ENCODE measurements at regions of chr6 and their contacts with region 1.

Region 1: GRCh38 chr6:90315354-90315950 is 18.8 kb upstream of the BACH2 start:
- DNase-seq: no peak
- ATAC-seq: peak; percentile 84
- H3K4me3 Mint-ChIP-seq: peak overlapping the region; percentile 55
- H3K27ac Mint-ChIP-seq: peak overlapping the region; percentile 91
- H3K4me1 Mint-ChIP-seq: peaks cover 72% of the 10 kb centered on the region
- H3K27me3 Mint-ChIP-seq: no peaks in the 10 kb centered on the region
- CTCF ChIP-seq: no peak

Region 2: DNA sequence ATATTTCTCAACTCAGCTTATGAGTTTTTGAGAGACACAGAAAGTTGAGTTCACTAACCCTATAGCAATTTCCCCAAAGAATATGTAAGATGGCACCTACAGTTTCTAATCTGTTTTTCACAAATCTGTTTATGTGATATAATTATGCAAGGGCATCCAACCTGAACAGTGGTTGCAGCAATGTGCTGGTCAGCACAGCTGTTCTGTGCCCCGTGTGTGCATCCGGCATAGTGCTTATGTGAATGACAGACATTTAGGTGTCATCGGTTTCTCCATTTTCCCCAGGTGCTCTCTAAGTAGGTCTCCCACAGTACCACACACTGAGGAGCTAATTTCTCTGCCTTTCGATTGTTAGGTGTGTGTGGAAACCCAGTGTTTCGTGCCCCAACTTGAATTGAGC is 11.1 kb before region 1 on chr6:
- CTCF ChIA-PET with region 1: no interaction called
- POLR2A ChIA-PET with region 1: interaction called, 15 read pairs
- intact Hi-C with region 1: loop called (anchors 1 kb)
- DNase-seq: no peak
- ATAC-seq: peak; percentile 72
- H3K4me3 Mint-ChIP-seq: peak overlapping the region; percentile 26
- H3K27ac Mint-ChIP-seq: peak overlapping the region; percentile 79
- H3K4me1 Mint-ChIP-seq: peaks cover 62% of the 10 kb centered on the region
- H3K27me3 Mint-ChIP-seq: no peaks in the 10 kb centered on the region
- CTCF ChIP-seq: no peak

Region 3: DNA sequence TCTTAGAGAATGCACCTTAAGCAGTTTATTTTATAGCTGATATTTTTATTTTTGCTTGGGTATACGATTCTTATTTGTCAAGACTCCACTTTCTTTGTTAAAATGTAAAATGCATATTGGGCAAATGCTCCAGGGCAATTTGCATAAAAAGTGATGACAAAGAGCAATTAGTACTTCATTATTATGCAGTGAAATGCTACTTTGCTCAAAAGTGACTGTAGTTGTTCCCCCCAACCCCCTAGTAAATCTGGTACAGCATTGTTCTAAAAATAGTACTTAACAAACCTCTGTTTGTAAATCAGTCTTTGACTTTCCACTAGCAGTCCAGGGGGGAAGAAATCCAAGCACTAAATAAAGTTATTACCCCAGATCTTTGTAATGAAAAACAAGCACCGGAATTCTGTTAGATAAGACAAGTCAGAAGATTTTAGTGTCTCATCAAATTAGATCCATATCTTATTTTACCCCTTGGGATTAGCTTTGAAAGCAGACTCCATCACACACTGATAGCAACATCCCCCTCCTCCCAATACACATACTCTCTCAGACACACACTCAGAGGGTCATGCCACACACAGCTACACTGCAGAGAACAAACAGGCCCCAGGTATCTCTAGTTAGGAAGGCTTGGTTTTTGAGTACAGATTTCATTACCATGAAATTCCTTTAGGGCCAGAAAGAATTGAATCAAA is 14.1 kb after region 1 on chr6:
- CTCF ChIA-PET with region 1: no interaction called
- POLR2A ChIA-PET with region 1: no interaction called
- intact Hi-C with region 1: loop called (anchors 2 kb)
- DNase-seq: no peak
- ATAC-seq: no peak
- H3K4me3 Mint-ChIP-seq: no peak overlapping the region
- H3K27ac Mint-ChIP-seq: no peak overlapping the region
- H3K4me1 Mint-ChIP-seq: peaks cover 7% of the 10 kb centered on the region
- H3K27me3 Mint-ChIP-seq: no peaks in the 10 kb centered on the region
- CTCF ChIP-seq: no peak

Region 4: DNA sequence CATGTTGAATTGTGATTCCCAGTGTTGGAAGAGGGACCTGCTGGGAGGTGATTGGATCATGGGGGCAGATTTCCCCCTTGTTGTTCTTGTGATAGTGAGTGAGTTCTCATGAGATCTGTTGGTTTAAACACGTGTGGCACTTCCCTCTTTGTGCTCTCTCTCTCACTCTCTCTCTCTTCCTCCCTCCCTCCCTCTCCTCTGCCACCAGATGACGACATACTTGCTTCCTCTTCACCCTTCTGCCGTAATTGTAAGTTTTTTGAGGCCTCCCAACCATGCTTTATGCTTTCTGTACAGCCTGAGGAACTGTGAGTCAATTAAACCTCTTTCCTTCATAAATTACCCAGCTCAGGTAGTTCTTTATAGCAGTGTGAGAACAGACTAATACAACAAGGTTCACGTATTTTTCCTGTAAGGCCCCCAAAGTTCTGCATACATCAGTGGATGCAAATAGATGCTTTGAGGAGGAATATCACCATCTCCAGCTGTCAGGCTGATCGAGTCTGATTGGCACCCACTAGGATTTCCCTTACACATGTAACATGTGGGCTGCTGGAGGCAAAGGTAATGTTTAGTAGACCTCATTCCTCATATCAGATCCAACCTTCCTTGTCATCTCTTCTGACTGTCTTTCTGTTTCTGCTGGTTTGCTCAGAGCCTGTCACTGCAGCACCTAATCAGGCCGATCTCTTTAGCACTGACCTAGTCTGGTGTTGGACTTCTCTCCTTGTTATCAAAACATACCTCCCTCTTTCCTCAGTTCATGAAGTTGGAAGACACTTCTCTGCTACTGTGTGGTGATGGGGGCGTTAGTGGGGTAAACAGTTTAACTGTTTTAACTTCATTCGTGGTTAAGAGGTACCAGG is 35.5 kb after region 1 on chr6:
- CTCF ChIA-PET with region 1: no interaction called
- POLR2A ChIA-PET with region 1: interaction called, 4 read pairs
- intact Hi-C with region 1: loop called (anchors 1 kb)
- DNase-seq: peak; percentile 20
- ATAC-seq: peak; percentile 95
- H3K4me3 Mint-ChIP-seq: peak overlapping the region; percentile 33
- H3K27ac Mint-ChIP-seq: peak overlapping the region; percentile 95
- H3K4me1 Mint-ChIP-seq: peaks cover 40% of the 10 kb centered on the region
- H3K27me3 Mint-ChIP-seq: no peaks in the 10 kb centered on the region
- CTCF ChIP-seq: no peak

Region 5: DNA sequence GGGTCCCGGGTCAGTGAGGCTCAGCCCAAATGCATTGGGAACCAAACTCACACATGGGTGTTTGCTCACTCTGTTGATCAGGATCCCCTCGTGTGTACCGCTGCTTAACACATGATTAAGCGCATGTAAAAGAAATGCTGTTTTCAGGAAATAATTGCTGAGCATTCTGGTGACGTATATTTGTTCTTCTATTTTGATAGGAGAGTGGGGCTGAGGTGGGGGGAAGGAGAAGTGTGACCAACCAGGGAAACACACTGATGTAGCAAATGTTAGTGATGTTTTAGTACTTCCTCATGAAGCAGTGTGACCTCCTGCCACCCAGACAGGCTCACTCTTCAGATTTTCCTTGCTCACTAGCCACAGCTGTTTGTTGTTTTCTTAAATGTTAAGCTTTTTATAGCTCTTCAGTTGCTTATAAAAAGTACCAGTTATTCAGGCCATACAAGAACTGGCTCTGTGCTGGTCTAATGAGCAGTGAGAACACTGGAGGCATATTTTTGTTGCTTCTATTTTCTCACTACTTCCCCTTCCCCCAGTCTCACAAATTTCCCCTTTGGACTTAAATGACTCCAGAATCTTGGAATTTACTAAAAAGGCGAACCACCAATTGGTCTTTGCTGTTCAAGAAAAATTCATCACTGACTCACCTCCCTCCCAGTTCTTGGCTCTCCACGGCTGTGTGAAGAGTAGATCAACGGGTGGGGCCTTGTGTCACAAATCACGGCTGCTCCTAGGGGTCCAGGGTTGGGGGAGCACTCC is 60.4 kb after region 1 on chr6:
- CTCF ChIA-PET with region 1: interaction called, 5 read pairs
- POLR2A ChIA-PET with region 1: interaction called, 4 read pairs
- intact Hi-C with region 1: loop called (anchors 1 kb)
- DNase-seq: peak; percentile 43
- ATAC-seq: peak; percentile 95
- H3K4me3 Mint-ChIP-seq: peak overlapping the region; percentile 50
- H3K27ac Mint-ChIP-seq: peak overlapping the region; percentile 94
- H3K4me1 Mint-ChIP-seq: peaks cover 72% of the 10 kb centered on the region
- H3K27me3 Mint-ChIP-seq: no peaks in the 10 kb centered on the region
- CTCF ChIP-seq: no peak

Measured in activated B cell treated with CpG ODN at 0.5 μM for 24 hours (primary cell).